CD8-positive, alpha-beta memory T cell (primary cell): ENCODE measurements at regions of chr12 and their contacts with region 1.

Region 1: DNA sequence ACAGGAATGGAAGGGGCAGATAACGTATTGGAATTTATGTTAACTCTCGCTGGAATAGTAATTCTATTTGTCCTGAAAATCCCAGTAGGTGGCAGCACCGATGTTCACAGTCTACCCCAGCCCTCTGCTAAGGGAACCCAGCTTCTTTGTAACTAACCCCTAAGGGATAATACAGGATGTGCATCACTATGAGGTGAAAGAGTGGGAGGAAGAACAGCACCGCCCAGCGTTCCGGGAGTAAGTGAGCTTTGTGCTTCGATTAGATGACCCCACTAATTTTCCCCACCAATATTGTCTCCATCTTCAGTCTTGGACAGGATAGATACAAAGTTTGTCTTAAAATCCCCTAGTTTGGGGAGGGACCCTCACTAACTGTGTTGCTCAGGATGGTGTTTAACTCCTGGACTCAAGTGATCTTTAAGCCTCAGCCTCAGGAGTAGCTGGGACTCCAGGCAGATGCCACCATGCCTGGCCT is 2.7 kb downstream of the SLC2A3 start:
- DNase-seq: peak; percentile 59 to 86 (median 82)
- H3K4me3 ChIP-seq: peak overlapping the region; percentile 100
- H3K4me3 Mint-ChIP-seq: no peak overlapping the region
- H3K27ac ChIP-seq: peak overlapping the region; percentile 94
- H3K27ac Mint-ChIP-seq: no peak overlapping the region
- H3K4me1 ChIP-seq: peaks cover 58% of the 10 kb centered on the region
- H3K4me1 Mint-ChIP-seq: peaks cover 27 to 36% (median 33%) of the 10 kb centered on the region in 3 donors
- H3K27me3 ChIP-seq: no peaks in the 10 kb centered on the region
- H3K27me3 Mint-ChIP-seq: no peaks in the 10 kb centered on the region

Region 2: DNA sequence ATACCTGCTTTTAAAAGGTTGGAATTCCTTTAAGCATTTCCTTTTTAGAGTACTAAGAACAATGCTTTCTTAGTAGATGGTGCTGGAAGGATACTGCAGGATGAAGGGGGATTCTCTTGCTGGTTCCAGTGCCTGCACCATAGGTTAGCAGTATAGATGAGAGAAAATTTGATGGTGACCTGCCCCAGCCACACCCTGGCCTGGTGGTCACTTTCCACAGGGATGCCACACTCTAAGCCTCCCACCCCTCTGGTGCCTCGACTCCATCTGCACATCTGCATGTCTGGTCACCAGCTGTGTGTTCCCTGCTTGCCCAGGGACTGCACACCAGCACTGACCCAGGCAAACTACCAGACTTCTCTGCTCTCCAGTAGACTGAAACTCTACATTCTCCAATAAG is 16.4 kb before region 1 on chr12:
- CTCF ChIA-PET with region 1: interaction called, 16 read pairs
- POLR2A ChIA-PET with region 1: no interaction called
- DNase-seq: no peak
- H3K4me3 ChIP-seq: no peak overlapping the region
- H3K4me3 Mint-ChIP-seq: peak overlapping the region in 3 of 7 donors; percentile 37 to 66 (median 56)
- H3K27ac ChIP-seq: no peak overlapping the region
- H3K27ac Mint-ChIP-seq: peak overlapping the region in 2 of 8 donors; percentile 58 to 89
- H3K4me1 ChIP-seq: peaks cover 5% of the 10 kb centered on the region
- H3K4me1 Mint-ChIP-seq: peaks cover 35 to 55% (median 51%) of the 10 kb centered on the region in 3 donors
- H3K27me3 ChIP-seq: no peaks in the 10 kb centered on the region
- H3K27me3 Mint-ChIP-seq: peaks cover 0 to 3% of the 10 kb centered on the region in 2 donors

Region 3: GRCh38 chr12:7970475-7971252 is 37.4 kb after region 1 on chr12:
- CTCF ChIA-PET with region 1: interaction called, 144 read pairs
- POLR2A ChIA-PET with region 1: interaction called, 42 read pairs
- DNase-seq: peak; percentile 73 to 89 (median 82)
- H3K4me3 ChIP-seq: peak overlapping the region; percentile 78
- H3K4me3 Mint-ChIP-seq: peak overlapping the region; percentile 83 to 94 (median 85)
- H3K27ac ChIP-seq: peak overlapping the region; percentile 90
- H3K27ac Mint-ChIP-seq: peak overlapping the region; percentile 92 to 100 (median 96)
- H3K4me1 ChIP-seq: peaks cover 19% of the 10 kb centered on the region
- H3K4me1 Mint-ChIP-seq: peaks cover 18 to 33% (median 28%) of the 10 kb centered on the region in 3 donors
- H3K27me3 ChIP-seq: no peaks in the 10 kb centered on the region
- H3K27me3 Mint-ChIP-seq: peaks cover 0 to 5% of the 10 kb centered on the region in 2 donors

Region 4: GRCh38 chr12:7995266-7995963 is 62.1 kb after region 1 on chr12:
- CTCF ChIA-PET with region 1: interaction called, 75 read pairs
- POLR2A ChIA-PET with region 1: interaction called, 20 read pairs
- DNase-seq: peak; percentile 65 to 91 (median 80)
- H3K4me3 ChIP-seq: no peak overlapping the region
- H3K4me3 Mint-ChIP-seq: no peak overlapping the region
- H3K27ac ChIP-seq: no peak overlapping the region
- H3K27ac Mint-ChIP-seq: no peak overlapping the region
- H3K4me1 ChIP-seq: peaks cover 25% of the 10 kb centered on the region
- H3K4me1 Mint-ChIP-seq: peaks cover 12 to 16% (median 12%) of the 10 kb centered on the region in 3 donors
- H3K27me3 ChIP-seq: no peaks in the 10 kb centered on the region
- H3K27me3 Mint-ChIP-seq: no peaks in the 10 kb centered on the region

Region 5: GRCh38 chr12:9869307-9870161 is 1936.2 kb after region 1 on chr12 and contains the start of gene CLEC2B:
- CTCF ChIA-PET with region 1: no interaction called
- POLR2A ChIA-PET with region 1: no interaction called
- DNase-seq: peak in 3 of 5 donors; percentile 59 to 63 (median 61)
- H3K4me3 ChIP-seq: peak within 1 kb of the TSS; percentile 65
- H3K4me3 Mint-ChIP-seq: peak within 1 kb of the TSS; percentile 88 to 97 (median 91)
- H3K27ac ChIP-seq: peak within 1 kb of the TSS; percentile 73
- H3K27ac Mint-ChIP-seq: peak within 1 kb of the TSS; percentile 89 to 100 (median 96)
- H3K4me1 ChIP-seq: peaks cover 9% of the 10 kb centered on the region
- H3K4me1 Mint-ChIP-seq: peaks cover 20 to 40% (median 22%) of the 10 kb centered on the region in 3 donors
- H3K27me3 ChIP-seq: no peaks in the 10 kb centered on the region
- H3K27me3 Mint-ChIP-seq: no peaks in the 10 kb centered on the region
- total RNA-seq, gene CLEC2B: 13.7 to 16.5 TPM